ENCODE measurements at regions of chr10 and their contacts with region 1.

Region 1: GRCh38 chr10:114043532-114044246 is at the start of gene ADRB1:
- DNase-seq: no peak
- H3K4me3 ChIP-seq: peak within 1 kb of the TSS; percentile 48 to 49
- H3K27ac ChIP-seq: peak within 1 kb of the TSS; percentile 44
- H3K4me1 ChIP-seq: peaks cover 12% of the 10 kb centered on the region
- H3K27me3 ChIP-seq: peaks cover 3% of the 10 kb centered on the region
- CTCF ChIP-seq: no peak
- POLR2A ChIP-seq: no peak
- total RNA-seq, gene ADRB1: not detected

Region 2: GRCh38 chr10:114801411-114801813 is 757.7 kb after region 1 on chr10:
- intact Hi-C with region 1: loop called (anchors 10 kb)
- DNase-seq: no peak
- H3K4me3 ChIP-seq: no peak overlapping the region
- H3K27ac ChIP-seq: no peak overlapping the region
- H3K4me1 ChIP-seq: no peaks in the 10 kb centered on the region
- H3K27me3 ChIP-seq: no peaks in the 10 kb centered on the region
- CTCF ChIP-seq: no peak
- POLR2A ChIP-seq: no peak

Measured in vagina (tissue), 2 donors.